CD8-positive, alpha-beta memory T cell (primary cell): ENCODE measurements at regions of chr2 and their contacts with region 1.

Region 1: DNA sequence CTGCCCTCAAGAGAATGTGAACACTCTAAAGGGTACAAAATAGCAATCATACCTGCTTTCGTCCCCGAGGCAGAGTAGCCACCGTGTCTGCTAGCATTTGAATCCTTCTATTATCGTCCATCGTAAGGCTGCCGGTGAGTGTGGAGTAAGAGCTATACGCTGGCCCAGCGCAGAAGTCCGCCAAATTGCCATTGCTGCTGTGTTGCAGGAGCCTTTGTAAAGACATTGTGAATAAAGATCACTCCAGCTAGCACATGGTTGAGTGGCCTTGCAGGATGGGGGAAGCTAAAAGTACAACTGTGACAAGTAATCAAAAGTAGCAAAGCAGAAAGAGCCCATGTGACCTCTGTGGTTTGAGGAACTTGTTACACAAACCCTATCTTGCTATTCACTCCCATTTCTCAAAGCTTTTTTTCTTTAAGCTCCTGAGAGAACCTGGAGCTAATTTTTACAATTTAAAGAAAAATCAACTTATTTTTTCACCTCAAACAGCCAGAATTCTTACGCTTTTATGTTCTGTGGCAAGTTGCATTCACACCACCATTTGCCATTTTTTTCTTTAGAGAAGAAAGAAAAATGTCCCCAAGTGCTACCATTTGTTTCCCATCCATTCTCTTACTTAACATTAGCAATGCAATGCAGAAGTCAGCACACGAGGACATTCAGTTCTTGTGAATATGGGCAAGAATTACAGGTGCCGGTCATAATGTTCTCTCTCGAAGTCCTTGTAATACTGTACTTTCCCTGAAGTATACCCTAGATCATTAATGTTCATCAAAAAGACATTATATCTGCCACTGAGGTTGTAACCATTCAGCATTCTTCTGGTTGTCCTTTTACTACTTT is at the start of gene CYTIP:
- DNase-seq: peak; percentile 19 to 80 (median 65)
- H3K4me3 ChIP-seq: peak within 1 kb of the TSS; percentile 93
- H3K4me3 Mint-ChIP-seq: peak within 1 kb of the TSS; percentile 93 to 99 (median 96)
- H3K27ac ChIP-seq: peak within 1 kb of the TSS; percentile 84
- H3K27ac Mint-ChIP-seq: peak within 1 kb of the TSS; percentile 92 to 98 (median 94)
- H3K4me1 ChIP-seq: peaks cover 38% of the 10 kb centered on the region
- H3K4me1 Mint-ChIP-seq: peaks cover 44 to 49% (median 47%) of the 10 kb centered on the region in 3 donors
- H3K27me3 ChIP-seq: no peaks in the 10 kb centered on the region
- H3K27me3 Mint-ChIP-seq: no peaks in the 10 kb centered on the region
- total RNA-seq, gene CYTIP: 195 to 202 TPM

Region 2: DNA sequence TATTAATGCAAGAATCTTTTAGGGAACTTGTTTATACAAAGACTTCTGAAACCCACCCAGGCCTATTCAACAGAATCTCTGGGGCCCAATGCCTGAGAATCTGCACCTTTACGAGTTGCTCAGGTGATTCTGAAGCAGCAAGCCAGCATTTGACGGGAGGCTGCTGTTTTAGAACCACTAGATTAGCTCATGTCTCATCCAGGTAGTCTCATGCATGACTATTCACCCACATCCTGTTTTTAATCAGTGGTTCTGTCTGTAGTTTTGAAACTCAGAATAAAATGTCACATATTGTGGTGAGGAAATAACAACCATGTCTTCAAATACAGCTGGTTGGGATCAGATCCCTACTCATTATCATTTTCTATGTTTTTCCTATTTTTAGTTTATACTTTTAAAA is 39.7 kb before region 1 on chr2:
- CTCF ChIA-PET with region 1: interaction called, 8 read pairs
- POLR2A ChIA-PET with region 1: interaction called, 18 read pairs
- DNase-seq: peak; percentile 42 to 89 (median 82)
- H3K4me3 ChIP-seq: peak overlapping the region; percentile 35
- H3K4me3 Mint-ChIP-seq: peak overlapping the region; percentile 30 to 77 (median 53)
- H3K27ac ChIP-seq: peak overlapping the region; percentile 71
- H3K27ac Mint-ChIP-seq: peak overlapping the region; percentile 94 to 99 (median 98)
- H3K4me1 ChIP-seq: peaks cover 52% of the 10 kb centered on the region
- H3K4me1 Mint-ChIP-seq: peaks cover 69 to 80% (median 78%) of the 10 kb centered on the region in 3 donors
- H3K27me3 ChIP-seq: no peaks in the 10 kb centered on the region
- H3K27me3 Mint-ChIP-seq: no peaks in the 10 kb centered on the region

Region 3: DNA sequence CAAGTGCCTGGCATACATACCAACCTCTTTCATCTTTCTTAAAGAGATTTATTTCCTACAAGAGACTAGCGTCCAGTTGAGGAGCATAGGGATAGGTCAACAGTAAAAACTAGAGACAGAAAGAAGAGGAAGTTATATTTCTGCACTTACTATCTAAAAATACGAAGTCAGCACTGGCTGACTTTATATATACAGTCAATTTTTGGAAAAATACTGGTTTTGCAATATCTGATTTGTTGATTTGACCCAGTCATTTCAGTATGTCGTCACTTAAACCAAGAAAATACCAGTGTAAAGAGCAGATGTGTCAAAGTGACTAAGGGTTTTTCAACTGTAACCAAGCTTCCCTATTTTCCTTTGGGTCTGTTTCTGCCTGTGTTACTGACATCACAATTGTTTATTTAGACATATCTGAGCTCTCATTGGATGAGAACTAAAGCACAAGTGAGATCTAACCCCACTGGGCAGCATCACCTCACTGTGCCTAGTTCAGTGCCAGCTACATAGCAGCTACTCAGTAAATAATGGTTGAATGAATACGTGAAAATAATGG is 23.2 kb before region 1 on chr2:
- CTCF ChIA-PET with region 1: interaction called, 13 read pairs
- POLR2A ChIA-PET with region 1: interaction called, 45 read pairs
- DNase-seq: no peak
- H3K4me3 ChIP-seq: no peak overlapping the region
- H3K4me3 Mint-ChIP-seq: peak overlapping the region; percentile 27 to 65 (median 54)
- H3K27ac ChIP-seq: no peak overlapping the region
- H3K27ac Mint-ChIP-seq: peak overlapping the region; percentile 83 to 97 (median 91)
- H3K4me1 ChIP-seq: peaks cover 65% of the 10 kb centered on the region
- H3K4me1 Mint-ChIP-seq: peaks cover 74 to 88% (median 88%) of the 10 kb centered on the region in 3 donors
- H3K27me3 ChIP-seq: no peaks in the 10 kb centered on the region
- H3K27me3 Mint-ChIP-seq: peaks cover 0 to 1% of the 10 kb centered on the region in 2 donors

Region 4: DNA sequence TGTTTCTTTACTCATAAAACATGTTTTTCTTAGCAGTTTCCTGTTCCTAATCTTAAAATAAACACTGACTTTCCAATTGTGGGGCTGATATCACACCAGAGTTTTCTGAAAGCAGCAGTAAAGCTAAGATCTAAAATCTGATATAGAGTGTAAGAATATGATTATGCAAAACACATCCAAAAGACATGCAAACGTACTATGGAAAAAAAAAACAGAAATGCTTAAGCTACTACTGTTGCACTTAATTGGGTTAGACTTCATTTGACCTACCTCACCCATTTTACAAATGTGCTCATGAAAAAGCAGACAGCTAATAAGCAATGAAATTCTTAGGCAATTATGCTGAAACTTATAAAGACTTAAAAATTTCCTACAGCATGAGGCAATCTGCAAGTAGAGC is 10.6 kb before region 1 on chr2:
- CTCF ChIA-PET with region 1: interaction called, 13 read pairs
- POLR2A ChIA-PET with region 1: interaction called, 25 read pairs
- DNase-seq: no peak
- H3K4me3 ChIP-seq: peak overlapping the region; percentile 58
- H3K4me3 Mint-ChIP-seq: peak overlapping the region; percentile 71 to 99 (median 96)
- H3K27ac ChIP-seq: no peak overlapping the region
- H3K27ac Mint-ChIP-seq: peak overlapping the region; percentile 72 to 99 (median 92)
- H3K4me1 ChIP-seq: peaks cover 66% of the 10 kb centered on the region
- H3K4me1 Mint-ChIP-seq: peaks cover 86 to 97% (median 88%) of the 10 kb centered on the region in 3 donors
- H3K27me3 ChIP-seq: no peaks in the 10 kb centered on the region
- H3K27me3 Mint-ChIP-seq: no peaks in the 10 kb centered on the region

Region 5: GRCh38 chr2:157849591-157849990 is 405.6 kb after region 1 on chr2:
- CTCF ChIA-PET with region 1: no interaction called
- POLR2A ChIA-PET with region 1: no interaction called
- DNase-seq: no peak
- H3K4me3 ChIP-seq: no peak overlapping the region
- H3K4me3 Mint-ChIP-seq: no peak overlapping the region
- H3K27ac ChIP-seq: no peak overlapping the region
- H3K27ac Mint-ChIP-seq: no peak overlapping the region
- H3K4me1 ChIP-seq: no peaks in the 10 kb centered on the region
- H3K4me1 Mint-ChIP-seq: peaks cover 8 to 59% (median 54%) of the 10 kb centered on the region in 3 donors
- H3K27me3 ChIP-seq: no peaks in the 10 kb centered on the region
- H3K27me3 Mint-ChIP-seq: no peaks in the 10 kb centered on the region